ENCODE measurements at regions of chr14 and their contacts with region 1.

Region 1: GRCh38 chr14:82029038-82029437 is 495.4 kb upstream of the SEL1L start:
- DNase-seq: no peak
- H3K4me3 Mint-ChIP-seq: no peak overlapping the region
- H3K27ac Mint-ChIP-seq: no peak overlapping the region
- H3K4me1 Mint-ChIP-seq: no peaks in the 10 kb centered on the region
- H3K27me3 Mint-ChIP-seq: no peaks in the 10 kb centered on the region
- CTCF ChIP-seq: no peak

Region 2: GRCh38 chr14:82805892-82806825 is 777.1 kb after region 1 on chr14:
- CTCF ChIA-PET with region 1: no interaction called
- intact Hi-C with region 1: loop called (anchors 5 kb)
- DNase-seq: no peak
- H3K4me3 Mint-ChIP-seq: no peak overlapping the region
- H3K27ac Mint-ChIP-seq: no peak overlapping the region
- H3K4me1 Mint-ChIP-seq: no peaks in the 10 kb centered on the region
- H3K27me3 Mint-ChIP-seq: no peaks in the 10 kb centered on the region
- CTCF ChIP-seq: no peak